Adrenal gland (tissue), 19 donors: ENCODE measurements at regions of chr3 and their contacts with region 1.

Region 1: DNA sequence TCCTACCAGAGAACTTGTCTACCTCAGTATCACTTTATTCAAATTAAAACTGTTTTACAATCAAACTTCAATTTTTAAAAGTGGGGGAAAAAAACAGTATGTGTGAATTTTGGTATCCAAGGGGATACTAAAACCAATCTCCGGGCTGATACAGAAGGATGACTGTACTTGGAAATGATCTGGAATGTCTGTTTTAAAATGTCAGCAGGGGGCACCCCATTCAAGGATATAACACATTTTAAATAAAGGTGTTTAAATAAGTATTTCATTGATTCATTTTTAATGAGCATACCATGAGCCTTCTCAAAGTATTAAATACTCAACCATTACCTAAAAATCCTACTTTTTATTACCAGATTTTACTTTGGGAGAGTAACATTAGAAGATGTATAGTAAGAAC is 67.9 kb downstream of the ULK4 start:
- DNase-seq: peak in 5 of 7 donors; percentile 16 to 41 (median 22)
- H3K4me3 ChIP-seq: no peak overlapping the region
- H3K27ac ChIP-seq: no peak overlapping the region
- H3K4me1 ChIP-seq: no peaks in the 10 kb centered on the region
- H3K27me3 ChIP-seq: no peaks in the 10 kb centered on the region
- CTCF ChIP-seq: peak; percentile 18 to 70 (median 47)
- POLR2A ChIP-seq: no peak

Region 2: DNA sequence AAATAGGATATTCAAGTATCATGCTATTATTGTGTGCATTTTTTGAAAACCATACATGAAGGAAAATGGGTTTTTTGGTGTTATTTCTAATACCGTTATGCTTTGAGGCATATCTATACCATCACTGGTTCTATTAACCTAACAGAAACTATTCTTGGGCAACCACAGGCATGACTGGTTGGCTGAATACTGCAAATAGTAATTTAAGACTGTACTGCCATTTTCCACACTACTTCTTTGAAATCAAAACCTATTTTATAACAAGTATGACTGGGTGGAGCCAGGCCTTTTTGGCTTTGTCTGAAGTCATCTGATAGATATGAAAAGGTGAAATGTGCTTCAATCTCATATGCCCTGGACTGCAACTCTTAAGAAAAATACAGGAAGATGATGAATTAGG is 47.1 kb before region 1 on chr3:
- intact Hi-C with region 1: no loop called
- DNase-seq: no peak
- H3K4me3 ChIP-seq: no peak overlapping the region
- H3K27ac ChIP-seq: no peak overlapping the region
- H3K4me1 ChIP-seq: no peaks in the 10 kb centered on the region
- H3K27me3 ChIP-seq: no peaks in the 10 kb centered on the region
- CTCF ChIP-seq: no peak
- POLR2A ChIP-seq: no peak

Region 3: DNA sequence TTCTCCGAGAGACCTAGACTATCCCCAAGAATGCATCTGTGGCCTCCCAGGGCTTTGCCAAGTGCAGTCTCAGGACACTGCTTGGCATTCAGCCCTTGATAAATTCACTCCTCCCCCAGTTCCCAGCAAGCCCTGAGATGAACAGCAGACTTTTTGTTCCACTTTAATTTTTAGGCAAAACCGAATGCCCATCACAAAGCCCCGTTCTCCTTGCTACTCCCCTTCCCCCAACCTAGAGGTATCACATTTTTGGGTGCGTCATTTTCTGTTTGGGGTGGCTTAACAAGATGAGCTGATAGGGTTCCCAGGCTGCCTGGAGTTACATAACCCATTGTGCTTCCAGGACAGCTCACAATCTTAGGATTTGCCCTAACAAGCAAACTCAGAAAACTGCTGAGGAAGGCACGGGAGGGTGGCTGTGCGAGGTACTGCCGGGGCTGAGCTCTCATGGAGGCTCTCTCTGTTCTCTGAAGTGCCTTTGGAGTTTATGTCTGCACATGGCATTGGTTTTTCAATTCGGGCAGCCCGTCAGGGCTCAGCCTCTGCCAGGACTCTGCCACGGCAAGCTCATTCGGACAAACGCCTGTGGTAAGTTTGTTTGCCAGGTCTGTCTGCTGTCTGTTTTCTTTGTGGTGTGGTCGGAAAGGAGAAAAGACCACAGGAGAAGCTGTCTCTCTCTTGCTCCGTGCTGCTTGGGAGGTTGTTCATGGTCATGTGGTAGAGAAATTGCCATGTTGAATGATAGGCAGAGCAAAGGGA is 197.2 kb after region 1 on chr3 and contains the start of gene TRAK1:
- intact Hi-C with region 1: loop called in 1 of 2 experiments (anchors 10 kb)
- DNase-seq: peak in 6 of 7 donors; percentile 38 to 69 (median 59)
- H3K4me3 ChIP-seq: no peak within 1 kb of the TSS
- H3K27ac ChIP-seq: peak within 1 kb of the TSS in 3 of 5 donors; percentile 11 to 54 (median 27)
- H3K4me1 ChIP-seq: peaks cover 0 to 5% of the 10 kb centered on the region in 2 donors
- H3K27me3 ChIP-seq: no peaks in the 10 kb centered on the region
- CTCF ChIP-seq: peak in 1 of 6 experiments; percentile 12
- POLR2A ChIP-seq: no peak
- total RNA-seq, gene TRAK1: 24.6 to 38.1 (median 26.5) TPM

Region 4: GRCh38 chr3:42101048-42101447 is 207.1 kb after region 1 on chr3:
- intact Hi-C with region 1: loop called (anchors 5 to 10 kb)
- DNase-seq: peak in 6 of 7 donors; percentile 38 to 76 (median 62)
- H3K4me3 ChIP-seq: no peak overlapping the region
- H3K27ac ChIP-seq: peak overlapping the region in 3 of 5 donors; percentile 1 to 43 (median 3)
- H3K4me1 ChIP-seq: peaks cover 11 to 40% of the 10 kb centered on the region in 2 donors
- H3K27me3 ChIP-seq: no peaks in the 10 kb centered on the region
- CTCF ChIP-seq: no peak
- POLR2A ChIP-seq: no peak

Region 5: DNA sequence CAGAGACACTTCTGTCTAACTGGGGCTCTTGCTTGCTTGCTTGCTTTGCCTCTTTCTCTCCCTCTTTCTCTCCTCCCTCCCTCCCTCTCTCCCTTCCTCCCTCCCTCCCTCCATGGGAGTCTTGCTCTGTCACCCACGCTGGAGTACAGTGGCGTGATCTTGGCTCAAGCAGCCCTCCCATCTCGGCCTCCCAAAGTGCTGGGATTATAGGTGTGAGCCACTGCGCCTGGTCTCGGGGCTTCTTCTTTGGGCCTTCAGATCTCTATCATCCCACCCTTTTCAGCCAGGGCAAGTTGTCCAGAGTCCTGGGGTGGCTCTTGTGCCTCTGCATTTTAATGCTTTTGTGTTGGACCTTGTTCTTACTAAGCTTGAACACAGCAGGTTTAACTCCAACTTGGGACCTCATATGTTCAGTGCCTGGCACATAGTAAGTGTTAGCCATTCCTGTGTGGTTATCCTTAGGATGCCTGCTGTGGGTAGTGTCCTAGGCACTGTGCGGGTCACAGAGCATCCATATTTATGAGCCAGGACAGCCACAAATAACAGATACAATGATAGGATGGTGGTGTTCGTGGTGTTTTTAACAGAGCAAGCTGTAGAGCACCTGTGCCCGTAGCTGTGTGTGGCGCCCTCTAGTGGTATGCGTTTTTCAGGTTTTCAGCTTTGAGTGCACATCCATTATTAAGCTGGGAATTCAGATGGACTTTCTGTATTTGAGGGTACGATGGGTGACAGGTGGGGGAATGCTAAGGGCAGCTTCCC is 296.9 kb after region 1 on chr3:
- intact Hi-C with region 1: loop called (anchors 5 to 10 kb)
- DNase-seq: peak; percentile 59 to 89 (median 76)
- H3K4me3 ChIP-seq: no peak overlapping the region
- H3K27ac ChIP-seq: no peak overlapping the region
- H3K4me1 ChIP-seq: no peaks in the 10 kb centered on the region
- H3K27me3 ChIP-seq: no peaks in the 10 kb centered on the region
- CTCF ChIP-seq: peak; percentile 74 to 88 (median 79)
- POLR2A ChIP-seq: no peak